ENCODE measurements at regions of chr3 and their contacts with region 1.

Region 1: DNA sequence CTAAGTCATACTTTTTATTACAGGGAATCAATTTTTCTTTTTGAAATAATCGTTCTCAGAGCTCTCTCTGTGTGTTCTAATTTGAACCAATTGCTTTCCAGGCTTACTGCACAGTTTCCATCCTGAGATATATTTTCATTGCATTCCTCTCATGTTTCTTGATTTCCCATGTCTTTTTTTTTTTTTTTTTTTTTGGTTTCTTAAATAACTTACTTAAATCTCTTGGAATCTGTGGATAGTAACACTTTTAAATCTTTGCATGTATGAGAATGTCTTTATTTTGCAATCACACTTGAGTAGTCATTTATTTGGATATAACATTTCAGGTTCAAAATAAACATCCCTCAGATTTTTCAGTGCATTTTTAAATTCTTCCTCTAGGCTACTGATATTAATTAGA is 14.5 kb upstream of the ABTB1 start:
- DNase-seq: no peak
- ATAC-seq: no peak
- H3K4me3 ChIP-seq: no peak overlapping the region
- H3K27ac ChIP-seq: no peak overlapping the region
- H3K4me1 ChIP-seq: no peaks in the 10 kb centered on the region
- H3K27me3 ChIP-seq: no peaks in the 10 kb centered on the region
- CTCF ChIP-seq: no peak

Region 2: DNA sequence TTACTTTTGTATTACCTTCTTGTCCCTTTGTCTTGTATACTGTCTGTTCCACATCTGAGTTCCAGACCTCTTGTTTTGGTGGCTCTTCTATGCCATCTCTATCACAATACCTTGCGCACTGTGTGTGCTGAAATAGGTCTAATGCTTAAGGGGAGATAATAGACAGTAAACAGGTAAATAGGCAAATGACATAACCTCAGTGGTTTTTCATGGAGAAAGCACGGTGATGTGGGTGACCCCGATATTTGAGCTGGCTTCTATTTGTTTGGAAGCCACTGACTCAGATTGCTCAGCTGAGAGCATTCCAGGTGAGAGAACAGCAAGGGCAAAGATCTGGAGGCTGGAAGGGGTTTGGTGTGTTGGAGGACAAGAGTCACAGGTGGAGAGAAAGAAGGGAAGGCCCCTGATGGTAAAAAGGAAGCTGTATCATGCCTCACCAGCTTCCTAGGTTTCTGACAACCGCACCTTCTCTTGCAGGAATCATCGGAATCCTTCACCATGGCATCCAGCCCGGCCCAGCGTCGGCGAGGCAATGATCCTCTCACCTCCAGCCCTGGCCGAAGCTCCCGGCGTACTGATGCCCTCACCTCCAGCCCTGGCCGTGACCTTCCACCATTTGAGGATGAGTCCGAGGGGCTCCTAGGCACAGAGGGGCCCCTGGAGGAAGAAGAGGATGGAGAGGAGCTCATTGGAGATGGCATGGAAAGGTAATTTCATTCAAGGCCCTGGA is 59.2 kb before region 1 on chr3:
- CTCF ChIA-PET with region 1: no interaction called
- POLR2A ChIA-PET with region 1: no interaction called
- in situ Hi-C with region 1: no loop called
- intact Hi-C with region 1: no loop called
- DNase-seq: no peak
- ATAC-seq: no peak
- H3K4me3 ChIP-seq: peak overlapping the region; percentile 68 to 89
- H3K27ac ChIP-seq: peak overlapping the region; percentile 76
- H3K4me1 ChIP-seq: peaks cover 20% of the 10 kb centered on the region
- H3K27me3 ChIP-seq: no peaks in the 10 kb centered on the region
- CTCF ChIP-seq: no peak

Region 3: GRCh38 chr3:128343287-128344051 is 685.2 kb after region 1 on chr3:
- CTCF ChIA-PET with region 1: no interaction called
- POLR2A ChIA-PET with region 1: interaction called, 11 read pairs
- in situ Hi-C with region 1: no loop called
- intact Hi-C with region 1: no loop called
- DNase-seq: peak; percentile 7
- ATAC-seq: peak; percentile 69
- H3K4me3 ChIP-seq: no peak overlapping the region
- H3K27ac ChIP-seq: no peak overlapping the region
- H3K4me1 ChIP-seq: peaks cover 7% of the 10 kb centered on the region; the same call in 1 of the 2 replicates
- H3K27me3 ChIP-seq: no peaks in the 10 kb centered on the region
- CTCF ChIP-seq: no peak